OCI-LY7 (cell line): ENCODE measurements at regions of chr15 and their contacts with region 1.

Region 1: DNA sequence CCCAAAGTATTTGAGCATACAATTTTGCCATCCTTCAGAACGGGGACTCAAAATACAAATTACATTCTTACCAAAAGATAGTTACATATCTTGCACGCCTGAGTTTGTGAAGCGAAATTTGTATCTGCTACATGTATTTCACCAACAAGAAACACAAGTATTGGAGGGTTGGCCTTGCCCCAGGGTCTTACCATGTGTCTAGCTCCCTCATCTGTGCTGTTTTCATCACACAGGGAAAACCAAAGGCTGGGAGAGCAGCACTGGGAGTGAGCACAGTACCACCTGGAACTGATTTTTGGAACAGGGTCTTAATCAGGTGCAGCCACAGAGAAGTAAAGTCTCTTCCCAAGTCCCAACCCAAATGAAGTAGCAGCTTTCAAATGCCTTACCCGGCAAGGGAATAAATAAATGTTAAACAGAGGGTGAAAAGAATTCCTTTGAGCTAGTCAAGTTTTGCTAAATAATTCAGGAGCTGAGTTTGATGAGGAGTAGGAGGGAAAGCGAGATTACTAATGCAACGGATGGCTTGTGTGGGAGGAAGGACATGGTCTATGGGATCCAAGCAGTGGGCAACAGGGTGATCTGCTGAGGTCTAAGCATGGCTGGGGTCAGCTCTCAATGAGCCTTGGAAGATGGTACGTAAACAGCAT is 204.6 kb upstream of the ST8SIA2 start:
- DNase-seq: no peak
- H3K4me3 ChIP-seq: no peak overlapping the region
- H3K27ac ChIP-seq: no peak overlapping the region
- H3K4me1 ChIP-seq: no peaks in the 10 kb centered on the region
- CTCF ChIP-seq: no peak

Region 2: GRCh38 chr15:91246998-91247397 is 942.0 kb before region 1 on chr15:
- CTCF ChIA-PET with region 1: interaction called, 14 read pairs
- POLR2A ChIA-PET with region 1: no interaction called
- intact Hi-C with region 1: no loop called
- DNase-seq: no peak
- H3K4me3 ChIP-seq: no peak overlapping the region
- H3K27ac ChIP-seq: no peak overlapping the region
- H3K4me1 ChIP-seq: no peaks in the 10 kb centered on the region
- CTCF ChIP-seq: no peak

Region 3: DNA sequence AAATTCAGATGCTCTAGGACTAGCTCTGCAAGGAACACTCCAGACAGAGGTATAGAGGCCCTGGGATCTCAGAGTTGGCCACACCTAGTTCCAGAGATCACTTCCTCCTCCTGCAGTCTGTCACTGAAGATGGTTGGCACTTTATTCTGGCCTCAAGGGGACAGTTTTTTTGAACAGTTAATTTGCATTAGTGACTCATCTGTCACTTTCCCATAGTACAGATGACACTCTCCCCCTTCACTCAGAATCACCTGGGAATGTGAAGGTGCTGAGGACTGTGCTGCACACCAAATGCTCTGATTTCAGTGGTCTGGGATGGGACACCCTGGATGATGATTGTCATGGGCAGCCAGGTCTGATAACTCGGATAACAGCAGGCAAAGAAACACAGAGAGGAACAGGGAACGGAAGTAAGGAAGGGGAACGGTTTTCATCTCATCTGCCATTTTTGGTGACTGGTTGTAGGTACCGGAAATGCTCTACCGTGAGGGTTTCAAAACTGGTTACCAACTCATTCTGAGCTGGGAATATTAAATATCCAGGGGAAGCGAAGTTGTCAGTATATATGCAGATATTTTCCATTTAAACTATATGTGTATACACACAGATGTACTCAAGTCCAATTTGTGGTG is 27.9 kb before region 1 on chr15:
- CTCF ChIA-PET with region 1: no interaction called
- POLR2A ChIA-PET with region 1: no interaction called
- intact Hi-C with region 1: no loop called
- DNase-seq: peak; percentile 42
- H3K4me3 ChIP-seq: peak overlapping the region; percentile 24
- H3K27ac ChIP-seq: peak overlapping the region; percentile 36
- H3K4me1 ChIP-seq: peaks cover 15% of the 10 kb centered on the region
- CTCF ChIP-seq: no peak

Region 4: DNA sequence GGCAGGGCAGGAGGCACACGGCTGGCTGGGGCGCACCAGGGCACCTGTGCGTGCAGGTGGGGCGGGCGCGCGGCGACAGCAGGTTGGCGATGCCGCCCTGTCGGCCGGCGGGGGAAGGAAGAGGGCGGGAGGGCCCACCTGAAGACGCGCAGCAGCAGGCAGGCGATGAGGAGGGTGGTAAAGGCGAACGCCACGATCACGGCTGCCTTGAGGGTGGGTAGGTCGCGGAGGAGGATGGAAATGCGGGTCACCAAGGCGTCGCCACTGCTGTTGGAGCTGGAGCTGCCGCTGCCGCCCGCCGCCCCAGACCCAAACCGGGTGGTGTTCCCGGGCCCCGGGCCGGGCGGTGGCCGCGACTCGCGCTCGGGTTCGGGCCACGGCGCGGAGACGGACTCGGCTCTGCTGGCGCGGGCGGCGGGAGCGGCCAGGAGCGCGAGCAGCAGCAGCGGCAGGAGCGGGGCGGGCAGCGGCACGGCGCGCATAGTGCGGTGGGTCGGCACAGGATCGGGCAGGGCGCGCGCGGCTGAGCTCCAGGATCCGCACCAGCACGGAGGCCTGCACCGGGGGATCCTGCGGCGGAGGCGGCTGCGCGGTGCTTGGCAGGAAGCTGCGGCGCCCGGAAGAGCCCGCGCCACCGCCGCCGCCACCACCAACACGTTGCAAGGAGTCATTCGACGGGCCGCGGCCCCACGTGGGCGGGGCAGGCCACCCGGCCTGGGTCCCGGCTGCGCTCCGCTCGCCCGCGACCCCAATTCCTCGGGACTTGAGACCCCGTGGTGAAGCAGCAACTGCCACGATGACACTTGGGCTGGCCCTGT is 466.3 kb after region 1 on chr15 and contains the start of gene FAM174B:
- CTCF ChIA-PET with region 1: no interaction called
- POLR2A ChIA-PET with region 1: no interaction called
- intact Hi-C with region 1: no loop called
- DNase-seq: no peak
- H3K4me3 ChIP-seq: no peak within 1 kb of the TSS
- H3K27ac ChIP-seq: no peak within 1 kb of the TSS
- H3K4me1 ChIP-seq: no peaks in the 10 kb centered on the region
- CTCF ChIP-seq: no peak
- total RNA-seq, gene FAM174B: 1.3 and 2.5 TPM in 2 replicates